SK-N-SH (cell line): ENCODE measurements at regions of chr9 and their contacts with region 1.

Region 1: DNA sequence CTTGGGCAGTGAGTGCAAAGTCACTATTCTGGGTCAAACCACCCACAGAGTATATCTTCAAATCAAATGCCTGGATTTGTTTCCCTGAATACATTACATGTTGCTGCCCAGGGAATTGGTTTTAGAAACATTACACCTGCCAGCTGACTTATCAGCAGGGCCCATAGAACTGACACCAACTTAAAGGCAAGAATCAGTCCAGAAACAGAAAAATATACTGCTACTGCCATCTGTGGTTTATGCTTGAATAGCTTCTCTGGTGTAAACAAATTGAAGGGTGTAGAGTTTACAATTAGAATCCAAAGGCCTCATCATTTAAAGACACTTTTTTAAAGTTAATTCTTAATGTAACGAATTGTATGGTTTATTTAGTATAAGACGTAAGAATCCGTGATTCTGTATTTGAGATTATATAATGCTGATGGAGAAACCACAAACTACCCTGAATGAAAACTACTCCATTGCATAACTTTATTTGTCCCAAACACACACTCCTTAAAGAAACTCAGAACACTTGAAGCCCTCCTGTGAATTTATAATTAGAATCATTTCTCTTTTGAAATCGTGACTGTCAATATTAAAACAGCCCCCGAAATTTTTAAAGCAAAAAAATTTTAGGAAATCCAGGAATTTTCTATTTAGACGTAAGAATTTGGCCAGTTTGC is 6.2 kb downstream of the NR6A1 start:
- DNase-seq: no peak
- H3K4me3 ChIP-seq: no peak overlapping the region
- H3K27ac ChIP-seq: no peak overlapping the region
- H3K4me1 ChIP-seq: peaks cover 8 to 16% of the 10 kb centered on the region in 2 experiments; a peak in 3 of 4 replicates
- H3K27me3 ChIP-seq: no peaks in the 10 kb centered on the region
- CTCF ChIP-seq: peak; percentile 56
- EP300 ChIP-seq: no peak
- RAD21 ChIP-seq: peak; percentile 65

Region 2: GRCh38 chr9:124530246-124530645 is 234.7 kb before region 1 on chr9:
- CTCF ChIA-PET with region 1: no interaction called
- POLR2A ChIA-PET with region 1: no interaction called
- DNase-seq: no peak
- H3K4me3 ChIP-seq: no peak overlapping the region
- H3K27ac ChIP-seq: no peak overlapping the region
- H3K4me1 ChIP-seq: peaks cover 0 to 30% of the 10 kb centered on the region in 2 experiments; a peak in 1 of 4 replicates
- H3K27me3 ChIP-seq: no peaks in the 10 kb centered on the region
- CTCF ChIP-seq: no peak
- EP300 ChIP-seq: no peak
- RAD21 ChIP-seq: no peak

Region 3: DNA sequence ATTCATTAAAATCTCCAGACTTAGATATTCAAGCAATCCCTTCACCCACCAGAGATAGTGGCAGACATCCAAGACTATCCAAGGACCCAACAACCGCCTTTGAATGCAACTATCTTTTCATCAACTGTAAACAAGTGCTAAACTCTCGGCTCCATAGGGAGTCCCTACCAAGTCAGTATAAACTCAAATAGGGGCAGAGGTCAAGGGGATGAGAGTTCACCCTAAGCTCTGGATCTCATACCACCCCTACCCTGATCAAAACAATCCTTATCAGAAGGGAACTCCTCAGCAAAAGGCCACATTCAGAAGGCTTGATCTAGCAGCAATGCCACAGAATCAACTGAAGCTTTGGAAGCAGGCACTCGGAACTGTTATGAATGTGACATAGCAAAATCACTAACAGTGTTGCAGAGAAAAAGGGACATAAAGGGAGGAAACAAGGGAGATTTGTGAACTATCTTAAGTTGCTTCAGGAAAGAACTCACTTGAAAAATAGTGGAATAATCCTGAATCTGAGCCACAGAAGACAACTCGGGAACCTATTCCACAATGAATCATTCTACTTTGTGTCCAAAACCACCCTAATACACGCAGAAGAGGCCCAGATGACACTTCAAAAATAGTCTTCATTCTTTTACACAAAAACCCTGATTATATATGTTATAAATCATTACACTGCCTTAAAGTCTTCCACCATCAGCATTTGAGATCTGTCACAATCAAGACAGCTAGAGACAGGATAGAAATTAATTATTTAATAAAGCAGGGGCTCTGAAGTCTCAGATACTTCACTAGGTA is 43.6 kb before region 1 on chr9:
- CTCF ChIA-PET with region 1: interaction called, 15 read pairs
- POLR2A ChIA-PET with region 1: no interaction called
- DNase-seq: no peak
- H3K4me3 ChIP-seq: peak overlapping the region in 1 of 2 experiments; percentile 22; a peak in 1 of 4 replicates
- H3K27ac ChIP-seq: peak overlapping the region; percentile 70 to 91
- H3K4me1 ChIP-seq: peaks cover 10 to 38% of the 10 kb centered on the region in 2 experiments
- H3K27me3 ChIP-seq: no peaks in the 10 kb centered on the region
- CTCF ChIP-seq: no peak
- EP300 ChIP-seq: peak in 1 of 2 experiments; percentile 58; a peak in 2 of 4 replicates
- RAD21 ChIP-seq: no peak

Region 4: GRCh38 chr9:124743686-124744348 is 21.1 kb before region 1 on chr9:
- CTCF ChIA-PET with region 1: interaction called, 10 read pairs
- POLR2A ChIA-PET with region 1: no interaction called
- DNase-seq: no peak
- H3K4me3 ChIP-seq: no peak overlapping the region
- H3K27ac ChIP-seq: peak overlapping the region; percentile 18 to 65; a peak in 3 of 4 replicates
- H3K4me1 ChIP-seq: peaks cover 8 to 36% of the 10 kb centered on the region in 2 experiments
- H3K27me3 ChIP-seq: no peaks in the 10 kb centered on the region
- CTCF ChIP-seq: no peak
- EP300 ChIP-seq: peak in 1 of 2 experiments; percentile 23; a peak in 1 of 4 replicates
- RAD21 ChIP-seq: no peak

Region 5: DNA sequence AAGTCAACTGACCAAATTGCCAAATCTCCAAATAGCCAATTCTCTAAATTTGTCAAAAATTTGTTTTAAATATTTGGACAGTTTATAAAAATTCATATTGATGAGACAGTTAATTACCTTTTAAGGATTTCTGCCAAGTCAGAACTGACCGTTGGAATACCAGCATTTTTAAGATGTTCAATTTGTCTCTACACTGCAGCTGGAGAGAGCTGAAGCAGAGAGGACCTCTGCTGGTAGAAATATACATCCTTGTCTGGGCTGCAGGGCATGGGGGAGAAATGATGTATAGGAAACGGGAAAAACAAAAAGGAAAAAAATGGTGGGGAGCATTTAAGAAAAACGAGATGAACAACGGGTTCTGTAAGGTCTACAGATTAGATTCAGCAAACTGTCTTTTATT is 10.6 kb before region 1 on chr9:
- CTCF ChIA-PET with region 1: interaction called, 15 read pairs
- POLR2A ChIA-PET with region 1: no interaction called
- DNase-seq: peak; percentile 31
- H3K4me3 ChIP-seq: no peak overlapping the region
- H3K27ac ChIP-seq: peak overlapping the region in 1 of 2 experiments; percentile 78; a peak in 2 of 4 replicates
- H3K4me1 ChIP-seq: peaks cover 7 to 56% of the 10 kb centered on the region in 2 experiments
- H3K27me3 ChIP-seq: no peaks in the 10 kb centered on the region
- CTCF ChIP-seq: peak; percentile 74
- EP300 ChIP-seq: no peak
- RAD21 ChIP-seq: peak; percentile 72